Activated CD4-positive, alpha-beta T cell treated with anti-CD3 and anti-CD28 coated beads for 36 hours (primary cell): ENCODE measurements at regions of chr6 and their contacts with region 1.

Region 1: GRCh38 chr6:135183532-135184440 is 2.7 kb downstream of the MYB start:
- DNase-seq: peak; percentile 92
- ATAC-seq: peak; percentile 55
- H3K4me3 Mint-ChIP-seq: peak overlapping the region; percentile 91
- H3K27ac Mint-ChIP-seq: peak overlapping the region; percentile 93
- H3K4me1 Mint-ChIP-seq: peaks cover 26% of the 10 kb centered on the region
- H3K27me3 Mint-ChIP-seq: no peaks in the 10 kb centered on the region

Region 2: DNA sequence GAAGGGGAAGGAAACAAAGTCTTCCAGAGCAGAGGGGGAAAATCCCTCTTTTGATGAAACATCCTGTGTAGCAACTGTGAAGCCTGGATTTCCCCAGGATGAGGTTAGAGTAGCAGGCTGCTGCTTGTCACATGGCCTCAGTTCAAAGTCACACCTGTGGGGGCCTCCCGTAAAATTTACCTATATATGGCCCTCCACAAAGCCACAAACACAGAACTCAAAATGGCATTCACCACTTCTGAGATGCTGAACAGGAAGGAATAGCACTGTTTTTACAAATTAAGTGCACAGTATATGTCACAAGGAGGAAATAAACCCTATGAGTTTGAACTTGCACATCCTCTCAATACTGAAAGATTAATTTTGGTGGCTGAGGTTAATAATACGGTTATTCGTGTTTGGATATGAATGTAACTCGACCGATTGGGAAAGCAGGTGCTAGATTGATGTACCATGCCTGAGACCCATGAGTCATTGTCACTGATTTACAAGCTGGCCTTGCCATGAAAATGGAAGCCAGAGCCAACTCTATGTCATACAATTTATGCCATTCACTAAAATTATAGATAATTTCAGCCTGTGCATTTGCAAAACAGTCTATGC is 936.5 kb before region 1 on chr6:
- CTCF ChIA-PET with region 1: no interaction called
- POLR2A ChIA-PET with region 1: no interaction called
- intact Hi-C with region 1: loop called in 1 of 2 experiments (anchors 10 kb)
- DNase-seq: peak; percentile 84
- ATAC-seq: peak; percentile 91
- H3K4me3 Mint-ChIP-seq: peak overlapping the region; percentile 16
- H3K27ac Mint-ChIP-seq: peak overlapping the region; percentile 94
- H3K4me1 Mint-ChIP-seq: peaks cover 56% of the 10 kb centered on the region
- H3K27me3 Mint-ChIP-seq: no peaks in the 10 kb centered on the region

Region 3: DNA sequence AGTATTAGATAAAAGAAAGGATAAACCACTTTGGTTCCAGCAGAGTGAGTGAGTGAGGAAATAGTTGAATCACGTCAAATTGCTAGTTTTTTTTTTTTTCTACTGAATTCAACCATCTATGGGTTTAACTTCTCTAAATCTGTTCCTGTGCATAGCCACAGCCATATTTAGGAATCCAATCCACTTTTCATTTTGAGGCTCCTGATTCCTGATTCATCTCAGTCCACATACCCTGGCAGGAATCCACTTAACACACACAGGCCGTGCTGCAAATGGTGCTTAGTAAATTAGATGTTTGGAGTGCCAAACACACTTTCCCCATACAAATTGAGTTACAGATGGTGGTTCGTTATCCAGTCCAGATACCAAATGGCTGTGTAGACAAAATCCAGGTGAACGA is 454.2 kb before region 1 on chr6:
- CTCF ChIA-PET with region 1: no interaction called
- POLR2A ChIA-PET with region 1: no interaction called
- intact Hi-C with region 1: no loop called
- DNase-seq: no peak
- ATAC-seq: no peak
- H3K4me3 Mint-ChIP-seq: no peak overlapping the region
- H3K27ac Mint-ChIP-seq: no peak overlapping the region
- H3K4me1 Mint-ChIP-seq: no peaks in the 10 kb centered on the region
- H3K27me3 Mint-ChIP-seq: peaks cover 9% of the 10 kb centered on the region

Region 4: DNA sequence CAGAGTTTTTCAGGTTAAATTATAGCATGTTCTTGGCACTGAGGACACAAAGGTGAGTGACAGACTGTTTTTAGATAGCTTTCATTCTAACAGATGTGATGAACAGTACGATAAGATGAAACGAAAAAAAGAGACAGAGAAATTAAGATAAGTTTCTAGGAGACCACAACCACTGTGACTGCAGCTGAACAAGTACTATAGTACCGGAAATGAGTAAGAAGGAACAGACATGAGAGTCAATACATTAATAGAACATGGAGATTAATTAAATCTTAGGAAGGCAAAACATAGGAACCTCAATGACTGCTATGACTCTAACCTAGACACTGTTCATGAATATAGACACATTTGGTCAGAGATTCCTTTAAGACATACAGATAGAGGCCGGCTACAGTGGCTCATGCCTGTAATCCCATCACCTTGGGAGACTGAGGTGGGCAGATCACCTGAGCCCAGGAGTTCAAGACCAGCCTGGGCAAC is 169.4 kb before region 1 on chr6:
- CTCF ChIA-PET with region 1: interaction called, 3 read pairs
- POLR2A ChIA-PET with region 1: interaction called, 6 read pairs
- intact Hi-C with region 1: loop called (anchors 1 to 5 kb)
- DNase-seq: peak; percentile 23
- ATAC-seq: peak; percentile 87
- H3K4me3 Mint-ChIP-seq: peak overlapping the region; percentile 18
- H3K27ac Mint-ChIP-seq: peak overlapping the region; percentile 45
- H3K4me1 Mint-ChIP-seq: peaks cover 59% of the 10 kb centered on the region
- H3K27me3 Mint-ChIP-seq: no peaks in the 10 kb centered on the region

Region 5: GRCh38 chr6:135054569-135055498 is 129.0 kb before region 1 on chr6 and contains the start of gene HBS1L:
- CTCF ChIA-PET with region 1: interaction called, 4 read pairs
- POLR2A ChIA-PET with region 1: interaction called, 14 read pairs
- intact Hi-C with region 1: loop called (anchors 1 kb)
- DNase-seq: peak; percentile 99
- ATAC-seq: peak; percentile 96
- H3K4me3 Mint-ChIP-seq: peak within 1 kb of the TSS; percentile 94
- H3K27ac Mint-ChIP-seq: peak within 1 kb of the TSS; percentile 96
- H3K4me1 Mint-ChIP-seq: peaks cover 22% of the 10 kb centered on the region
- H3K27me3 Mint-ChIP-seq: no peaks in the 10 kb centered on the region
- total RNA-seq, gene HBS1L: 133 to 141 TPM

Region 6: GRCh38 chr6:135128268-135128914 is 55.4 kb before region 1 on chr6:
- CTCF ChIA-PET with region 1: interaction called, 9 read pairs
- POLR2A ChIA-PET with region 1: interaction called, 4 read pairs
- intact Hi-C with region 1: loop called (anchors 1 kb)
- DNase-seq: peak; percentile 83
- ATAC-seq: peak; percentile 97
- H3K4me3 Mint-ChIP-seq: peak overlapping the region; percentile 54
- H3K27ac Mint-ChIP-seq: peak overlapping the region; percentile 87
- H3K4me1 Mint-ChIP-seq: peaks cover 44% of the 10 kb centered on the region
- H3K27me3 Mint-ChIP-seq: no peaks in the 10 kb centered on the region

Region 7: GRCh38 chr6:135162678-135163439 is 20.9 kb before region 1 on chr6:
- CTCF ChIA-PET with region 1: interaction called, 15 read pairs
- POLR2A ChIA-PET with region 1: interaction called, 3 read pairs
- intact Hi-C with region 1: loop called (anchors 1 kb)
- DNase-seq: peak; percentile 67
- ATAC-seq: no peak
- H3K4me3 Mint-ChIP-seq: peak overlapping the region; percentile 24
- H3K27ac Mint-ChIP-seq: peak overlapping the region; percentile 94
- H3K4me1 Mint-ChIP-seq: peaks cover 64% of the 10 kb centered on the region
- H3K27me3 Mint-ChIP-seq: no peaks in the 10 kb centered on the region

Region 8: DNA sequence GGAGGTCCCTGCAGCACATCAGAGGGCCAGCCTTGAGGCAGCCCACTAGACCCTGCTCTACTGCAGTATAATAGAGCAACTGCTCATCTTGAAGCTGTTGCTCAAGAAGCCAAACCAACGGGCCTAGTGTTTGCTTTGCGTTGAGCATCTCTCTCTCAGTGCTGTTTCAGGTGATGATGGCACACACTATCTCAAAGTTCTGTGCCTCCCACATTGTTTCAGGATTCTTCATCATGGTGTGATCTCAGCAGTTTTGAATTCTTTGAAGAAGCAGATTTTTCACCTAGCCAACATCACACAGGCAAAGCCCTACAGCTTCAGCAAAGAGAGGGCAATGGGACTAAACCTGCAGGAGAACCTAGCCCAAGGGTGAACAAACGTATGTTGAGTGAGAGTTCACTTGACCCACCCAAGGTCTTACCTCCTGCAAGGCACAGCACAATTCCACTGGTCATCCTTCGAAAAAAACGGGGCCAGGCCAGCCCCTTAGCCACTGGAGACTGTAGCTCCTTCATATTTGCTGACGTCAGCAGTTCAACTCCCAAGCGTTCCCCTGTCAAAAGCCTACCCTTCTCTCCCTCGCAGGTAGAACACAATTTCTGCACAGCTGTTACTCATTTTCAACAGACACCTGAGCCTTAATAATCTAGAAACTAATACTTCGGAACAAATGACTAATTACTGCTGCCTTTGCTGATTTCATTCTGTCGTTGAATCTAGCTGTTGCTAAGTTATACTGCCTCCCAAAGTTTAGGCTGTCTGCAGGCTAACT is 13.1 kb after region 1 on chr6:
- CTCF ChIA-PET with region 1: interaction called, 16 read pairs
- POLR2A ChIA-PET with region 1: no interaction called
- intact Hi-C with region 1: loop called (anchors 1 kb)
- DNase-seq: peak; percentile 53
- ATAC-seq: peak; percentile 92
- H3K4me3 Mint-ChIP-seq: no peak overlapping the region
- H3K27ac Mint-ChIP-seq: peak overlapping the region; percentile 64
- H3K4me1 Mint-ChIP-seq: peaks cover 22% of the 10 kb centered on the region
- H3K27me3 Mint-ChIP-seq: no peaks in the 10 kb centered on the region

Region 9: DNA sequence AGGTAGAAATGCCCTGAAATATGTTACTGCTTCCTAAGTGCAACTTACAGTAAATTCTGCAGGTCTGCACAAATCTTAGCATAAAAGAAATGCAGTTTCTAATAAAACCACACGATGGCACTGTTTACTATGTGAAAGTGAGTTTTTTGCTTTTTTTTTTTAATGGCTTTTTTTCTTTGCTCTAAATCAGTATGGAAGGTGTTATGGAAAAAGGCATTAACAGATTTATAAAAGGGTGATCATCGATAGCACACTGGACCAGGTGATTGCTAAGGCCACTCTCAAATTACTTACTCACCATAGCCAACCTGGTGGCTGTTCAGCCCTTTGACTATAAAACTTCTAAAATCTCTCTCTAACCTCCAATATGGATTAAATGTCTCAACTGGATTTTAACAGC is 267.9 kb after region 1 on chr6:
- CTCF ChIA-PET with region 1: no interaction called
- POLR2A ChIA-PET with region 1: no interaction called
- intact Hi-C with region 1: no loop called
- DNase-seq: no peak
- ATAC-seq: no peak
- H3K4me3 Mint-ChIP-seq: no peak overlapping the region
- H3K27ac Mint-ChIP-seq: no peak overlapping the region
- H3K4me1 Mint-ChIP-seq: no peaks in the 10 kb centered on the region
- H3K27me3 Mint-ChIP-seq: no peaks in the 10 kb centered on the region